Left cardiac atrium (tissue), 4 donors: ENCODE measurements at regions of chr2 and their contacts with region 1.

Region 1: DNA sequence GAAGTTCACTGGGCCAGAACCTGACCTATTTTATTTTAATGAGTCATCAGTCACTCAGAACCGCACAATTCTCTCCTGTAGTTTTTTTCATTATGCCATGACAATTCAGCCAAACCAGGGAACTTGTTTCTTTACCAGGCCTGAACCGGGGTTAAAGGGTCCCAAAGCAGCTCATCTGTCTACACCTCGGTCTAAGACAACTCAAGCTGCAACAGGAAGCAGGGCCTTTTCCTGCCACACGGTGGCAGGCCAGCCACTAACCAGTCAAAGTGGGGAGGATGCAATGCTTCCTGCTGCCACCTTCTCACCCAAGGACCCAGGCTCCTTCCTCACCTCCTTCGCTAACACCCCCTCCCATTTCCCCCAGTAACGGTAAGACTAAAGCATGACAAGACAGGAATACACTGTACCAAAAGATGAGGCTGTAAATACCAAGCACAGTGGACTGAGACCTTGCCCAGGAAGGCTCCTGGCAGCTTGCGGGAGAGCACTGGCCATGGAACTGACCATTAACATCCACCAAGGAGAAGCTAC is 56.7 kb upstream of the ACKR3 start:
- DNase-seq: peak; percentile 66
- ATAC-seq: peak; percentile 86 to 92

Region 2: GRCh38 chr2:236352761-236353593 is 160.0 kb before region 1 on chr2:
- intact Hi-C with region 1: loop called in 1 of 2 experiments (anchors 5 kb)
- DNase-seq: no peak
- ATAC-seq: no peak

Region 3: GRCh38 chr2:236485519-236485918 is 27.4 kb before region 1 on chr2:
- intact Hi-C with region 1: no loop called
- DNase-seq: no peak
- ATAC-seq: no peak

Region 4: GRCh38 chr2:236562434-236562833 is 49.5 kb after region 1 on chr2:
- intact Hi-C with region 1: loop called in 1 of 2 experiments (anchors 5 kb)
- DNase-seq: no peak
- ATAC-seq: no peak

Region 5: GRCh38 chr2:237026981-237027711 is 514.2 kb after region 1 on chr2:
- intact Hi-C with region 1: loop called (anchors 2 to 5 kb)
- DNase-seq: peak; percentile 80
- ATAC-seq: peak; percentile 70 to 87

Region 6: DNA sequence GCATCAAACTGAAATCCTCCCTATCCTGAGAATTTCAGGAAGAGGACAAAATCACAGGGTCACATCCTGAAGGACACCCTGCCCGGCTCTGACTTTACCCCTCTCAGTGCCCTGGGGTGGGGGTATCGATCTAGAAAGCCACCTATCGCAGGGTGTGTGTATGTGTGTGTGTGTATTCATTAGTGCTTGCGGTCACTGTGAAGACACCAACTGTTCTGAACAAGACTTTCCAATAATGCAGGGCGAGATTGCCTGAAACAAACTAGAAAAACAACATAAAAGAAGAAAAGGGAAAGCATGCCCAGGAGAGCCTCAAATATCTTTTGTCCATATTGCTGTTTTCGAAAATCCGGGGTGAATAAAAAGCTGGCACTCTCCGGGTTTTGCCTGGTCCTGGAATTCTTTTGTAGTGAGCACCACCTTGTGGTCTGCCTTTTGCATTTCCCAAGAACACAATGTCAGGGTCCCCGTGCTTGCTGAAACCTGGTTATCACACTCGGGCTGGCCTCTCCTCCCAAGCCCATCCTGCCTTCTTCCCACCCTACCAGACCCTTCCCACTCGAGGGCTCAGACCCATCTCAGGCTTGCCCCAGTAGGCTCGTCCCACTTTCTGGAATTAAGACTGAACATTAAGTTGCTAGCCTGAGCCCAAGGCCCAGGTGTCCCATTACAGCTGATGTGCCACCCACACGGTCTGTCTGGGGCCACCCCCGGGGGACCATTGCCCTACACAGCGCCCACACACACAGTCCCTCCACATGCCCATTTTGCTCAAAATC is 547.8 kb after region 1 on chr2:
- intact Hi-C with region 1: loop called in 1 of 2 experiments (anchors 10 kb)
- DNase-seq: peak; percentile 43
- ATAC-seq: peak; percentile 75 to 78